ENCODE measurements at regions of chr12 and their contacts with region 1.

Region 1: GRCh38 chr12:14167005-14167628 is 185.7 kb upstream of the GRIN2B start:
- DNase-seq: peak; percentile 61
- ATAC-seq: peak; percentile 80
- H3K4me3 ChIP-seq: no peak overlapping the region
- H3K27ac ChIP-seq: no peak overlapping the region
- H3K4me1 ChIP-seq: no peaks in the 10 kb centered on the region
- H3K27me3 ChIP-seq: no peaks in the 10 kb centered on the region
- CTCF ChIP-seq: peak; percentile 90 to 98 (median 91)
- POLR2A ChIP-seq: no peak
- RAD21 ChIP-seq: peak; percentile 97

Region 2: GRCh38 chr12:13255792-13256691 is 911.1 kb before region 1 on chr12:
- CTCF ChIA-PET with region 1: interaction called, 35 read pairs
- POLR2A ChIA-PET with region 1: interaction called, 3 read pairs
- RAD21 ChIA-PET with region 1: interaction called, 7 to 10 read pairs
- intact Hi-C with region 1: loop called (anchors 1 kb)
- DNase-seq: peak; percentile 89
- ATAC-seq: peak; percentile 100
- H3K4me3 ChIP-seq: peak overlapping the region in 1 of 2 experiments; percentile 13; a peak in 1 of 4 replicates
- H3K27ac ChIP-seq: no peak overlapping the region
- H3K4me1 ChIP-seq: peaks cover 0 to 15% of the 10 kb centered on the region in 2 experiments; a peak in 2 of 4 replicates
- H3K27me3 ChIP-seq: no peaks in the 10 kb centered on the region
- CTCF ChIP-seq: peak; percentile 91 to 98 (median 97)
- POLR2A ChIP-seq: no peak
- RAD21 ChIP-seq: peak; percentile 98

Region 3: GRCh38 chr12:13362260-13362841 is 804.8 kb before region 1 on chr12:
- CTCF ChIA-PET with region 1: interaction called, 5 read pairs
- POLR2A ChIA-PET with region 1: no interaction called
- RAD21 ChIA-PET with region 1: no interaction called
- intact Hi-C with region 1: loop called (anchors 5 kb)
- DNase-seq: peak; percentile 77
- ATAC-seq: peak; percentile 99
- H3K4me3 ChIP-seq: no peak overlapping the region
- H3K27ac ChIP-seq: no peak overlapping the region
- H3K4me1 ChIP-seq: peaks cover 3 to 7% of the 10 kb centered on the region in 2 experiments; a peak in 3 of 4 replicates
- H3K27me3 ChIP-seq: no peaks in the 10 kb centered on the region
- CTCF ChIP-seq: peak; percentile 89 to 97 (median 94)
- POLR2A ChIP-seq: no peak
- RAD21 ChIP-seq: peak; percentile 88

Region 4: GRCh38 chr12:13744561-13744960 is 422.6 kb before region 1 on chr12:
- CTCF ChIA-PET with region 1: interaction called, 3 read pairs
- POLR2A ChIA-PET with region 1: no interaction called
- RAD21 ChIA-PET with region 1: interaction called in 1 of 2 experiments, 3 read pairs
- intact Hi-C with region 1: loop called (anchors 1 kb)
- DNase-seq: no peak
- ATAC-seq: no peak
- H3K4me3 ChIP-seq: no peak overlapping the region
- H3K27ac ChIP-seq: no peak overlapping the region
- H3K4me1 ChIP-seq: peaks cover 13 to 18% of the 10 kb centered on the region in 2 experiments; a peak in 3 of 4 replicates
- H3K27me3 ChIP-seq: no peaks in the 10 kb centered on the region
- CTCF ChIP-seq: no peak
- POLR2A ChIP-seq: no peak
- RAD21 ChIP-seq: no peak

Region 5: DNA sequence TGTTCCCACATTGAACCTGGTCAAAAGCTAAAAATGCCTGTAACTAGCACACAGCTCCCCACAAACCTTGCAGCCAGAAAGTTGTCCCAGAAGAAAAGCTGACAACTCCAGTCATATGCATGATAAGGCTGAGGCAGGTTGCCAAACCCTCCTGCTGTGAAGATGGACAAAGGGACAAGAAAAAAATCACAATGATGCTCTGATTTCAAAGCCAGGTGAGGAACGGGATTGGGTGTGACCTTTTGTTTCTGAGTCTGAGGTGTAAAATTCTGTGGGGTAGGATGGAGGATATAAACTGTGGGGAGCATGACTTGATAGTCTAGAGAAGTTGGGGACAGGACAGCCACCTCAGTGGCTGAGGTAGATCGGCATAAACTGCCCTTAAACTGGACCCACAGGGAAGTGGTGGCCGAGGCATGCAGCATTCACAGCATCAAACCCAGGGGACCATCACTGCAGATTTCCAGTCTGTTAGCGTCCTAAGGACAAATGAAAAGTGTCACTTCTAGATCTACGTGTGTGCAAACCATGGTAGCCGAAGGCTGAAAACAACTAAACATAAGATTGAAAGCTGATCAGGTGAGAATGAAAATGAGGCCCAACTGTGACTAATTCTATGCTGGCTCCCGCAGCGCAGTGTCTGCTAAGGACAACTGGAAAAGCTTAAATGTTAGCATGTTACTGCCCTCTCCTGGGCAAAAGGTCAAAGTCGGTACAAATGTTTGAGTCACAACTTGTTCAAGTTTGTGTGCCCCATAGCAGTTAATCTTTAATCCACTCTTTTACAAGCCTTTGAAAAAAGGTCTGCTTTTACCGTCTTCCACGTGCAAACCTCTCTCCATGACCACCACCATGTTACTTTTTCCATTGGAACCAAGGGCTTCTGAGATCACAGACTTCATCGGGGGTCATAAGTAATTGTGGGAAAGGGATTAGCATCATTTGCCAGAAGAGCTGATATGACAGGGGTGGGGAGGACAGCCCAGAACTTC is 225.6 kb before region 1 on chr12:
- CTCF ChIA-PET with region 1: interaction called, 11 read pairs
- POLR2A ChIA-PET with region 1: no interaction called
- RAD21 ChIA-PET with region 1: interaction called in 1 of 2 experiments, 3 read pairs
- intact Hi-C with region 1: no loop called
- DNase-seq: peak; percentile 77
- ATAC-seq: peak; percentile 96
- H3K4me3 ChIP-seq: peak overlapping the region in 1 of 2 experiments; percentile 26; a peak in 1 of 4 replicates
- H3K27ac ChIP-seq: peak overlapping the region; percentile 67
- H3K4me1 ChIP-seq: peaks cover 22 to 23% of the 10 kb centered on the region in 2 experiments
- H3K27me3 ChIP-seq: no peaks in the 10 kb centered on the region
- CTCF ChIP-seq: peak; percentile 49 to 65 (median 61); a peak in 5 of 6 replicates
- POLR2A ChIP-seq: no peak
- RAD21 ChIP-seq: peak; percentile 88

Measured in HCT116 (cell line).